Naive thymus-derived CD4-positive, alpha-beta T cell (primary cell): ENCODE measurements at regions of chr16 and their contacts with region 1.

Region 1: GRCh38 chr16:28069971-28070794 is 6.7 kb upstream of the GSG1L start:
- DNase-seq: no peak
- ATAC-seq: no peak
- H3K4me3 ChIP-seq: no peak overlapping the region
- H3K4me3 Mint-ChIP-seq: no peak overlapping the region
- H3K27ac ChIP-seq: no peak overlapping the region
- H3K27ac Mint-ChIP-seq: peak overlapping the region in 1 of 9 donors; percentile 25
- H3K4me1 ChIP-seq: no peaks in the 10 kb centered on the region
- H3K4me1 Mint-ChIP-seq: peaks cover 0 to 4% (median 0%) of the 10 kb centered on the region in 7 donors
- H3K27me3 ChIP-seq: no peaks in the 10 kb centered on the region
- H3K27me3 Mint-ChIP-seq: peaks cover 8 to 28% (median 10%) of the 10 kb centered on the region in 5 donors

Region 2: GRCh38 chr16:27301236-27301861 is 768.8 kb before region 1 on chr16:
- CTCF ChIA-PET with region 1: no interaction called
- POLR2A ChIA-PET with region 1: no interaction called
- intact Hi-C with region 1: no loop called
- DNase-seq: no peak
- ATAC-seq: no peak
- H3K4me3 ChIP-seq: no peak overlapping the region
- H3K4me3 Mint-ChIP-seq: no peak overlapping the region
- H3K27ac ChIP-seq: no peak overlapping the region
- H3K27ac Mint-ChIP-seq: no peak overlapping the region
- H3K4me1 ChIP-seq: no peaks in the 10 kb centered on the region
- H3K4me1 Mint-ChIP-seq: peaks cover 14 to 48% (median 23%) of the 10 kb centered on the region in 7 donors
- H3K27me3 ChIP-seq: no peaks in the 10 kb centered on the region
- H3K27me3 Mint-ChIP-seq: no peaks in the 10 kb centered on the region

Region 3: GRCh38 chr16:27972500-27972899 is 97.7 kb before region 1 on chr16:
- CTCF ChIA-PET with region 1: no interaction called
- POLR2A ChIA-PET with region 1: no interaction called
- intact Hi-C with region 1: loop called in 1 of 2 experiments (anchors 1 kb)
- DNase-seq: peak in 6 of 9 donors; percentile 19 to 44 (median 34)
- ATAC-seq: peak; percentile 86
- H3K4me3 ChIP-seq: no peak overlapping the region
- H3K4me3 Mint-ChIP-seq: peak overlapping the region in 1 of 10 donors; percentile 30
- H3K27ac ChIP-seq: no peak overlapping the region
- H3K27ac Mint-ChIP-seq: peak overlapping the region in 1 of 9 donors; percentile 21
- H3K4me1 ChIP-seq: peaks cover 0 to 4% of the 10 kb centered on the region in 2 donors
- H3K4me1 Mint-ChIP-seq: peaks cover 0 to 10% (median 4%) of the 10 kb centered on the region in 7 donors
- H3K27me3 ChIP-seq: no peaks in the 10 kb centered on the region
- H3K27me3 Mint-ChIP-seq: peaks cover 5 to 15% (median 11%) of the 10 kb centered on the region in 5 donors